ENCODE measurements at regions of chr3 and their contacts with region 1.

Region 1: DNA sequence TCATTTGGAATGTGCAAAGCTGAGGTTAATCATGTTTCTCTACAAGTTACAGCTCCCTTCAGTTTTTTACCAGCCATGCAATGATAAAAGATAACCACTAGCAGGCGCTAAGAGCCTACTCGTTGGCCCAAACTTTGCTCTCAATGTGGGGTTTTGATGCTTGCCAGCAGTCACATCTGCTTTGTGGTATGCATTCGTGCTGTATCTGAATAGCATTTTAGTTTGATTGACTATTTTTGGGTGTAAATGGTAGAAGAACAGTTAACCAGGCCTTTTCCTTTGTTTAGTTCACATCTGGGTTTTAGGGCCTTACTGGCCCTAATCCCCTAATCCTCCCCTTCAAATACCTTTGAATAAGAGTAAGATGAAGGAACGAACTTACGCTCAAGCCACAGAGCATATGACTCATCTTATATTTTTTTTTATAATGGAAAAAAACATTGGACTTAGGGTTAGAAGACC is 4.4 kb upstream of the CLDN11 start:
- DNase-seq: no peak
- ATAC-seq: peak in 1 of 2 donors; percentile 36
- H3K4me3 ChIP-seq: no peak overlapping the region
- H3K27ac ChIP-seq: no peak overlapping the region
- H3K4me1 ChIP-seq: peaks cover 0 to 5% of the 10 kb centered on the region in 2 donors
- H3K27me3 ChIP-seq: peaks cover 18 to 28% (median 23%) of the 10 kb centered on the region in 3 donors
- CTCF ChIP-seq: peak; percentile 50 to 82 (median 63)
- POLR2A ChIP-seq: no peak

Region 2: DNA sequence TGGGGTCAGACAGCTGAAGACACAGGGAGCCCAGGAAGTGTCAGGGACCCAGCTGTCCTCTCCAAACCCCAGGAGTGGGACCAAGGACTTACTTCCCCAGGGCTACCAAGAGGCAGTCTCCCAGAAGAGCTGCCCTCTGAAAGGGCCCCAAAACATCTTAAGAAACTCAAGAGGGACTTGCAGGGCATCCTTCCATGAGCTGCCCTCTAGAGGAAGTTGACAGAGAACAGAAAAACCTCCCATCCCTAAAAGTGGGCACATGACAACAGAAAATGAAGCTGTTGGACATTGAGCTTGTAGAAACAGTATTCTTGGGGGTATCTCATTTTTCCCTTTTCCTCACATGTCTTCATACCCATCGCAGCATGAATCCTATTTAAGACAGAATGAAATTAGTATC is 809.7 kb before region 1 on chr3:
- in situ Hi-C with region 1: no loop called
- intact Hi-C with region 1: no loop called
- DNase-seq: no peak
- ATAC-seq: no peak
- H3K4me3 ChIP-seq: no peak overlapping the region
- H3K27ac ChIP-seq: no peak overlapping the region
- H3K4me1 ChIP-seq: no peaks in the 10 kb centered on the region
- H3K27me3 ChIP-seq: no peaks in the 10 kb centered on the region
- CTCF ChIP-seq: no peak
- POLR2A ChIP-seq: no peak

Region 3: DNA sequence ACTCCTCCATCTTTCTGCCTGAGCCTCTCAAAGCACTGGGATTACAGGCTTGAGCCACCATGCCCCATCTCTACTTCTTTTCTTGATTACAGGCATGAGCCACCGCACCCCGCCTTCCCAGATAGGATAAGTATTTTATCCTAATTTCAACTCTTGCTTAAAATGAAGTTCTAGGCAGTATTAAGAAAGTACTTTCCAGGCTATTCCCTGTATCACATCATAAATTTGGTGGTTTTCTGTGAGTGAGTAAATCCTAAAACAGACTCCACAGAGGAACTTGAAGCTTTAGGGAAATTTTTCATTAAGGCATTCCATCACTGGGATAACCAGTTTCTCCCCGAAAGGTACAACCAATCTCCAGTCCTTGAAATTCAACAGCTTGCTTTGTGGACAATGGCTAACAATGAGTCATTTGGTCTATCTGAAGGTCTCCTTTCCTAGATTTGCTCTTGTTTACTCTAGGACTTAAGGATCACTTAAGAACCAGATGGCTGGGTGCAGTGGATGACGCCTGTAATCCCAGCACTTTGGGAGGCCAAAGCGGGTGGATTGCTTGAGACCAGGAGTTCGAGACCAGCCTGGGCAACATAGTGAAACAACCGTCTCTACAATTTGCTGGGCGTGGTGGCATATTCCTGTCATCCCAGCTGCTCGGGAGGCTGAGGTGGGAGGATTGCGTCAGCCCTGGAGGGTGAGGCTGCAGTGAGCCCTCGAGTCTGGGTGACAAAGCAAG is 106.4 kb before region 1 on chr3:
- in situ Hi-C with region 1: loop called (anchors 5 to 10 kb)
- intact Hi-C with region 1: loop called (anchors 1 kb)
- DNase-seq: no peak
- ATAC-seq: no peak
- H3K4me3 ChIP-seq: no peak overlapping the region
- H3K27ac ChIP-seq: no peak overlapping the region
- H3K4me1 ChIP-seq: no peaks in the 10 kb centered on the region
- H3K27me3 ChIP-seq: no peaks in the 10 kb centered on the region
- CTCF ChIP-seq: no peak
- POLR2A ChIP-seq: no peak

Region 4: DNA sequence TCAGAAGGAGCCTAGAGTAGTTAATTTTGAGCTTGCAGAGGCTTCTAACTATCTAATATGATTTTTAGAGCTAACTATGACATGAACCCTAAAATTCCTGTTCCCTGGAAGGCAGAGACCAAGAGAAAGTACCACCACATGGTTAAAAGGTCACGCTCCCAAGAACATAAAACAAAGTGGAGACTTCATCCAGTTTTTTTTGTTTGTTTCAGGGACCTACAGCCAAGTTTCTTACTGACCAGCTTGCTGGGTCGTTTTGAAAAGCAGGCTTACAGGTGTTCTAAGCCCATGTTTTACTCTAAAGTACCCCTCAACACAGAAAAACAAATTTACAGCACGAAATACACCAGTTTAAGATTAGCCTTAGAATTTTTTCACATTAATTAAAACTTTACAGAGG is 96.3 kb before region 1 on chr3:
- in situ Hi-C with region 1: loop called (anchors 5 to 10 kb)
- intact Hi-C with region 1: no loop called
- DNase-seq: no peak
- ATAC-seq: no peak
- H3K4me3 ChIP-seq: no peak overlapping the region
- H3K27ac ChIP-seq: no peak overlapping the region
- H3K4me1 ChIP-seq: no peaks in the 10 kb centered on the region
- H3K27me3 ChIP-seq: no peaks in the 10 kb centered on the region
- CTCF ChIP-seq: no peak
- POLR2A ChIP-seq: no peak

Region 5: GRCh38 chr3:170357176-170357919 is 56.9 kb before region 1 on chr3 and contains the start of gene SKIL:
- in situ Hi-C with region 1: no loop called
- intact Hi-C with region 1: loop called (anchors 5 kb)
- DNase-seq: peak; percentile 95 to 97
- ATAC-seq: peak; percentile 77 to 83
- H3K4me3 ChIP-seq: peak within 1 kb of the TSS; percentile 86 to 93 (median 92)
- H3K27ac ChIP-seq: peak within 1 kb of the TSS; percentile 98 to 99 (median 99)
- H3K4me1 ChIP-seq: peaks cover 30 to 47% of the 10 kb centered on the region in 2 donors
- H3K27me3 ChIP-seq: no peaks in the 10 kb centered on the region
- CTCF ChIP-seq: peak in 2 of 5 experiments; percentile 3 to 11
- POLR2A ChIP-seq: peak; percentile 92 to 93
- total RNA-seq, gene SKIL: 26.7 to 45.1 (median 29.4) TPM

Region 6: GRCh38 chr3:170689893-170690660 is 275.8 kb after region 1 on chr3:
- in situ Hi-C with region 1: loop called in 2 of 4 experiments (anchors 5 to 25 kb)
- intact Hi-C with region 1: loop called (anchors 2 kb)
- DNase-seq: peak in 1 of 2 donors; percentile 38
- ATAC-seq: peak in 1 of 2 donors; percentile 65
- H3K4me3 ChIP-seq: no peak overlapping the region
- H3K27ac ChIP-seq: no peak overlapping the region
- H3K4me1 ChIP-seq: peaks cover 0 to 7% of the 10 kb centered on the region in 2 donors
- H3K27me3 ChIP-seq: no peaks in the 10 kb centered on the region
- CTCF ChIP-seq: peak in 4 of 5 experiments; percentile 23 to 71 (median 53)
- POLR2A ChIP-seq: no peak

Region 7: DNA sequence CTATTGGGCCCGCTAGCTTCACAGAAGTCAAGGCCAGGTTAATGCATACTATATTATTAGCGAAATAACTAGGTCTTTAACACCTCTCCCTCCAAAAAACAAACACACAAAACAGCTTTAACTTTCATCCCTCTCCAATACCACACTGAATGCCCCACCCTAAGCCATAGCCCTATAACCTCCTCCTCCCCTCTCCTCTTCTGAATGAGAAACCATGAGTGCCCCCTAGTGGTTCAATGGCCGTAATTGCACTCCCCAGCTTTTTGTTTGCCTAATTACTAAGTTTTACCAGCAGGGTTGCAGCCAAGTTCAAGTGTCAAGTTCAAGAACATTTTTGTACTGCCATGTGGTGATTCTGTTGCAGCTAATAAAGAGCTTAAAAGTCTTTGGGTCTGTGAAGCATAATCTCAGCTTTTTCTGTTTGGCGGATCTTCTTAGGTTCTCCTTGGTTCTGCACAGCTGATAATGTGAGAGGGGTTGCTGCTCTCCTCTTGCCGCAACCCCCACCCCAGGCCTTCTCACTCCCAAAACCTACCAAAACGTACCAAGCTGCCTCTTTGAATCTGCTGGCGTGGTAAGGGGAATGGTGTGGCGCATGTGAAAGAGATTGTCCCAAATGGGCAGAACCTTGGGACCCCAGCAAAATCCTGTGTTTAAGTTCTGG is 397.8 kb after region 1 on chr3:
- in situ Hi-C with region 1: loop called (anchors 10 to 25 kb)
- intact Hi-C with region 1: loop called (anchors 2 kb)
- DNase-seq: peak; percentile 17 to 29
- ATAC-seq: peak; percentile 65 to 66
- H3K4me3 ChIP-seq: no peak overlapping the region
- H3K27ac ChIP-seq: no peak overlapping the region
- H3K4me1 ChIP-seq: no peaks in the 10 kb centered on the region
- H3K27me3 ChIP-seq: no peaks in the 10 kb centered on the region
- CTCF ChIP-seq: peak; percentile 70 to 80 (median 75)
- POLR2A ChIP-seq: no peak

Region 8: GRCh38 chr3:171028025-171028778 is 614.0 kb after region 1 on chr3:
- in situ Hi-C with region 1: no loop called
- intact Hi-C with region 1: no loop called
- DNase-seq: peak in 1 of 2 donors; percentile 14
- ATAC-seq: peak; percentile 36 to 46
- H3K4me3 ChIP-seq: peak overlapping the region; percentile 39 to 69 (median 44)
- H3K27ac ChIP-seq: no peak overlapping the region
- H3K4me1 ChIP-seq: peaks cover 0 to 9% of the 10 kb centered on the region in 2 donors
- H3K27me3 ChIP-seq: no peaks in the 10 kb centered on the region
- CTCF ChIP-seq: no peak
- POLR2A ChIP-seq: no peak

Measured in gastrocnemius medialis (tissue), 4 donors.